ENCODE measurements at regions of chr7 and their contacts with region 1.

Region 1: GRCh38 chr7:117479225-117480054 is at the start of gene CFTR:
- DNase-seq: peak; percentile 87
- H3K4me3 Mint-ChIP-seq: peak within 1 kb of the TSS; percentile 97
- H3K27ac Mint-ChIP-seq: peak within 1 kb of the TSS; percentile 98
- H3K4me1 Mint-ChIP-seq: peaks cover 31% of the 10 kb centered on the region
- H3K27me3 Mint-ChIP-seq: no peaks in the 10 kb centered on the region
- CTCF ChIP-seq: no peak
- total RNA-seq, gene CFTR: 267 and 502 TPM in 2 replicates

Region 2: DNA sequence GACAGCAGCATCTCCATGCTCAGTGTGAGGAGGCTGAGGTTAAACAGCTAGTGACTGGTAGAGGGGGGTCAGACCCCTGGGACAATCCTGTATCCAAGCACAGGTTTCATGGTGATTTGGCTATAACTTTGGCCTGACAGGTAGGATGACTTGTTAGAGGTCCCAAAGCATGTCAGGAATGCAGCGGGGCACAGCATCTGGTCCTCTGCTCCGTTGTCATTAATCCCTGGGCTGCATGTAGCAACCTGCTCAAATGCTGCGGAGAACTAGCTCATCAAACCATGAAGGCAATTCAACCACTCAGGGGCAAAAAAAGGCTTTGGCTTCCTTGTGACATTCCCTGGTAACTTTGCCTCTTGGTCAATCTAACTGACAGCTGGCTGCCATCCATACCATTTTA is 183.4 kb before region 1 on chr7:
- CTCF ChIA-PET with region 1: no interaction called
- intact Hi-C with region 1: no loop called
- DNase-seq: no peak
- H3K4me3 Mint-ChIP-seq: no peak overlapping the region
- H3K27ac Mint-ChIP-seq: no peak overlapping the region
- H3K4me1 Mint-ChIP-seq: no peaks in the 10 kb centered on the region
- H3K27me3 Mint-ChIP-seq: peaks cover 21% of the 10 kb centered on the region
- CTCF ChIP-seq: no peak

Region 3: GRCh38 chr7:117399820-117400422 is 79.5 kb before region 1 on chr7:
- CTCF ChIA-PET with region 1: interaction called, 9 read pairs
- intact Hi-C with region 1: loop called (anchors 1 kb)
- DNase-seq: no peak
- H3K4me3 Mint-ChIP-seq: no peak overlapping the region
- H3K27ac Mint-ChIP-seq: peak overlapping the region; percentile 93
- H3K4me1 Mint-ChIP-seq: peaks cover 56% of the 10 kb centered on the region
- H3K27me3 Mint-ChIP-seq: no peaks in the 10 kb centered on the region
- CTCF ChIP-seq: peak; percentile 29

Region 4: GRCh38 chr7:117435475-117436043 is 43.9 kb before region 1 on chr7:
- CTCF ChIA-PET with region 1: interaction called, 7 read pairs
- intact Hi-C with region 1: loop called (anchors 1 kb)
- DNase-seq: peak; percentile 60
- H3K4me3 Mint-ChIP-seq: peak overlapping the region; percentile 13
- H3K27ac Mint-ChIP-seq: peak overlapping the region; percentile 98
- H3K4me1 Mint-ChIP-seq: peaks cover 51% of the 10 kb centered on the region
- H3K27me3 Mint-ChIP-seq: no peaks in the 10 kb centered on the region
- CTCF ChIP-seq: no peak

Region 5: GRCh38 chr7:117445206-117445605 is 34.2 kb before region 1 on chr7:
- CTCF ChIA-PET with region 1: interaction called, 4 read pairs
- intact Hi-C with region 1: loop called (anchors 2 kb)
- DNase-seq: peak; percentile 74
- H3K4me3 Mint-ChIP-seq: peak overlapping the region; percentile 43
- H3K27ac Mint-ChIP-seq: peak overlapping the region; percentile 97
- H3K4me1 Mint-ChIP-seq: peaks cover 68% of the 10 kb centered on the region
- H3K27me3 Mint-ChIP-seq: no peaks in the 10 kb centered on the region
- CTCF ChIP-seq: no peak

Region 6: DNA sequence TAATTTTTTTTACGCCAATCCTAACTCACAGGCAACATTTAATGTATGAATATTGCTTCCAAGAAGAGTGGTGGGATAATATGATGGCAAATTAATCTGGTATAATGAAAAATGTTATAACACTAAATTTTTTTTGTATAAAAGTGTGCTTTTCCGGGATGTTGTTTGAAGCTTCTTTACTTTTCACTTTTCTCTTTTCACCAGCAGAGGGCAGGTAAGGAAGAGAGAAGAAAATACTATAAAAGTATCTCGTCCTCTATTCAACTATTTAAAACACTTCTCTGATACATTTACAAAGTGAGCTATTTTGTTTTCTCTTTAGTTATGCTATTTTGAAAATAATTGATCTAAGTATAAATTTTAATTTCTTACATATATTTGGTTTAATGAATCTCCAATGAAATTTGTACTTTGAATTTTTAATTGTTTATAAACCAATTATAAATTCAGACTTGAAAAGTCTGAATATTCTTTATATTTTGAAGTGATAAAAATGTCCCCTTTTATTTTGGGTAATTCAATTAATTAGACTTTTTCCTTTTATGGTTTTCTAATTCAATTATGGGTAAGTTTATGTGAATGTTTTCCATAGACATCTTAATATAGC is 20.4 kb before region 1 on chr7:
- CTCF ChIA-PET with region 1: interaction called, 10 read pairs
- intact Hi-C with region 1: no loop called
- DNase-seq: no peak
- H3K4me3 Mint-ChIP-seq: no peak overlapping the region
- H3K27ac Mint-ChIP-seq: no peak overlapping the region
- H3K4me1 Mint-ChIP-seq: peaks cover 7% of the 10 kb centered on the region
- H3K27me3 Mint-ChIP-seq: no peaks in the 10 kb centered on the region
- CTCF ChIP-seq: peak; percentile 37